CD4-positive, alpha-beta memory T cell (primary cell): ENCODE measurements at regions of chr2 and their contacts with region 1.

Region 1: DNA sequence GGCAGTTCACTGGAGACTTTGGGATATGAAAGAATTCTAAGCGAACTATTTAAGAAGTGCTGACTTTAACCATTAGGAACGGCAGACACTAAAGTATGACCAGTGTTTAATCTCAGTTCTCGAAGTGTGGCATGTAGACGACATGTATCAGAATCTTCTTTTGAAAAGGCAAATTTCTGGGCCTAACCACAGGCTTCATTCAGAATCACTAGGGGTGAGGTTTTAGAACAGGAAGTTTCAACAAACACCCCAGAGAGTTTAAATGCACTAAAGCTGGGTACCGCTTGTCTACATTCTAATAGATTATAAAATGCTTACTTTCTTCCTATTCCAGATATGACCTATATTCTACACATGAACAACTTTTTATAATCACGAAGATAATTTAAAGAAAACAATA is 180.3 kb downstream of the ANKRD44 start:
- DNase-seq: peak; percentile 30 to 52 (median 41)
- H3K4me3 ChIP-seq: no peak overlapping the region
- H3K4me3 Mint-ChIP-seq: peak overlapping the region in 6 of 8 donors; percentile 22 to 64 (median 32)
- H3K27ac ChIP-seq: no peak overlapping the region
- H3K27ac Mint-ChIP-seq: peak overlapping the region; percentile 8 to 86 (median 85)
- H3K4me1 ChIP-seq: peaks cover 75% of the 10 kb centered on the region
- H3K4me1 Mint-ChIP-seq: peaks cover 57 to 84% (median 67%) of the 10 kb centered on the region in 4 donors
- H3K27me3 ChIP-seq: no peaks in the 10 kb centered on the region
- H3K27me3 Mint-ChIP-seq: no peaks in the 10 kb centered on the region

Region 2: GRCh38 chr2:197145471-197146138 is 15.3 kb after region 1 on chr2:
- CTCF ChIA-PET with region 1: interaction called, 5 read pairs
- POLR2A ChIA-PET with region 1: interaction called, 20 read pairs
- intact Hi-C with region 1: loop called (anchors 1 kb)
- DNase-seq: peak; percentile 43 to 63 (median 50)
- H3K4me3 ChIP-seq: no peak overlapping the region
- H3K4me3 Mint-ChIP-seq: peak overlapping the region in 7 of 8 donors; percentile 14 to 84 (median 47)
- H3K27ac ChIP-seq: peak overlapping the region; percentile 42
- H3K27ac Mint-ChIP-seq: peak overlapping the region; percentile 72 to 95 (median 84)
- H3K4me1 ChIP-seq: peaks cover 89% of the 10 kb centered on the region
- H3K4me1 Mint-ChIP-seq: peaks cover 54 to 88% (median 69%) of the 10 kb centered on the region in 4 donors
- H3K27me3 ChIP-seq: no peaks in the 10 kb centered on the region
- H3K27me3 Mint-ChIP-seq: no peaks in the 10 kb centered on the region

Region 3: DNA sequence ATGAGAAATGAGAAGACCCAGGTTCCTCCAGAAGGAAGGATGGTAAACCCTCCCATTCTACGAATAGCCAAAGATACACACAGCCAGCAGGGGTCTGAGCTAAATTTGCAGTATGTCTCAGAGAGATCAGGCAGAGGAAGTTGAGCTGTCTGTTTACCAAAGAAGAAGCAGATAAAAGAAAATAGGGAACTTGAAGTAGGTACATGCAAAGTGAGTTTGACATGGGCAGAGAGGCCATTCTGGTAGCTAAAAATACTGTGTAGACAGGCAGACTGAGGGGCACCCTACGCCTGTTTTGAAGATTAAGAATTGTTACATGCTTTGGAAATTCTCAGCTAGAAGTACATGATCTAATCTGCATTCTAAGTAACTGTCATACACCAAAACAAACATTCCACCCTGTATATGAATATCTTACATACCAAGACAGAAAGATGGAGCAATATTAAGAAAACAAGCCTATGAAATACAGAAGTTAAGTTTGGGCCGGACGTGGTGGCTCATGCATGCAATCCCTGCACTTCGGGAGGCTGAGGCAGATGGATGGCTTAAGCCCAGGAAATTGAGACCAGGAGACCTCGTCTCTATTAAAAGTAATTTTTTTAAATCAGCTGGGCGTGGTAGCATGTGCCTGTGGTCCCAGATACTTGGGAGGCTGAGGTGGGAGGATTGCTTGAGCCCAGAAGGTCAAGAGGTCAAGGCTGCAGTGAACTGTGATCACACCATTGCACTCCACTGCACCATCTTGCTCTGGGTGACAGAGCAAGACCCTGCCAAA is 22.3 kb after region 1 on chr2:
- CTCF ChIA-PET with region 1: interaction called, 7 read pairs
- POLR2A ChIA-PET with region 1: interaction called, 3 read pairs
- intact Hi-C with region 1: loop called (anchors 2 kb)
- DNase-seq: peak; percentile 18 to 44 (median 32)
- H3K4me3 ChIP-seq: no peak overlapping the region
- H3K4me3 Mint-ChIP-seq: peak overlapping the region; percentile 13 to 68 (median 62)
- H3K27ac ChIP-seq: no peak overlapping the region
- H3K27ac Mint-ChIP-seq: peak overlapping the region; percentile 15 to 92 (median 72)
- H3K4me1 ChIP-seq: peaks cover 78% of the 10 kb centered on the region
- H3K4me1 Mint-ChIP-seq: peaks cover 62 to 85% (median 77%) of the 10 kb centered on the region in 4 donors
- H3K27me3 ChIP-seq: no peaks in the 10 kb centered on the region
- H3K27me3 Mint-ChIP-seq: no peaks in the 10 kb centered on the region